ENCODE measurements at regions of chr5 and their contacts with region 1.

Region 1: DNA sequence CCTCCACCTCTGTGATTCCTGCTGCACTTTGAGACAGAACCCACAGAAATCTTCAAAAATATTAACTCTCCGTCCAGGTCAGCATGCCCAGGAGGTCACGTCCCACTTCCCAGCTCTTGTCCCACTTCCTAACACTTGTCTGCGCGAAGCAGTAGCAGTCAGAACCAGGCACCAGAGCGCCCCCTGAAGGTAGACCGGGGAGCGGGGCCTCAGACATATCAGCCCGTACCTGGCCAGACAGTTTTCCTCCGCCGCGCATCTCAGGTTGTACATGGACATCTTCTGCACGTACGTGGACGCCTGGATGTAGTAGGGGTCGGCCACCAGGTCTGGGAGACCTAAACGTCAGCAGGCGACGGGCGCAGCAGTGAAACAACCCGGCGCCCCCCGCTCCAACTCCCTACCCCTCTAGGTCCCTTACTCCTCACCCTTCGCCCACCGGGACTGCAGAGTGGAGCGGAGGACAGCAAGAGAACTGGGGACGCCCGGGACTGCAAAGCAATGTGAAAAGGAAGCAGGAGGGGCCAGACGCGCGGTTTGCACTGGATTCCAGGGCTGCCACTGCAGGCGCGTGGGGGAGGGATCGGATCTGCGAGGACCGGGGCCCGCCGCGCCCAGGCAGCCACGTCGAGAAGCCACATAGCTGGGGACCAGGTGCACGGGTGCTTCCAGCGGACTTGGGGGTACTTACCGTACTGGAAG is 1.2 kb downstream of the LOX start:
- DNase-seq: peak; percentile 76

Region 2: DNA sequence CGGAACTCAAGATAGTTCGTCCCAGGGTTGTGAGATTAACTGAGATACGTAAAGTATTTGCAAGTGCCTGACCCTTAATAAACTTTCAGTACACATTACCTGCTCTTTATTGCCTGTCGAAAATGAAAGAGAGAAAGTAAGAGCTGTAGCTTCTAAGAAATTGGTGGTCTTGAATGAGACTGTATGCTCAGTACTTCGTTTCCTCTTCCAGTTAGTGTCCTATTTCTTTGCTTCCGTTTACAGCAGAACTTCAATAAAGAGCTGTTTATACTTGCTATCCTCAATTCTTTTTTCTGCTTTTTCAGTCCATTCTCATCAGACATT is 114.5 kb before region 1 on chr5:
- CTCF ChIA-PET with region 1: interaction called, 5 read pairs
- POLR2A ChIA-PET with region 1: interaction called, 10 read pairs
- DNase-seq: no peak

Region 3: DNA sequence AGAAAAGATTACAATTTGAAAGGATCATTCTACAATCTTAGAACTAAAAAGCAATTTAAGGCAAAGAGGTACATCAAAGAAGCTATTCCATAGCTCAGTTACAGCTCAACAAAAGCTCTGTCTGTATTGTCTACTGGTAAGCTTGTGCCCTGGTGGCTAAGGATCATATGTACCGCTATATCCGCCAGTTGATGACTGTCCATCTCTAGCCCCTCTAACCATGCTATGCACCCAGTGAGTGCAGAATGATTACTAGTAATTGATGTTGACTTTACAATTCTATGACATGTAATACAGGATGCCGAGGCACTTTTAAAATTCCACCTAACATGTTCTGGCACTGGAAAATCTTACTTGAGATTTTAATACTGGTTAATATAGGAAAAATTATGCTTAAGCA is 11.8 kb before region 1 on chr5:
- CTCF ChIA-PET with region 1: interaction called, 10 read pairs
- POLR2A ChIA-PET with region 1: interaction called, 3 read pairs
- DNase-seq: no peak

Measured in HEK293T (cell line).